ENCODE measurements at regions of chr18 and their contacts with region 1.

Region 1: GRCh38 chr18:12838178-12838634 is 45.8 kb downstream of the PTPN2 start:
- DNase-seq: peak; percentile 74
- H3K4me3 Mint-ChIP-seq: peak overlapping the region; percentile 84
- H3K27ac Mint-ChIP-seq: peak overlapping the region; percentile 89
- H3K4me1 Mint-ChIP-seq: peaks cover 51% of the 10 kb centered on the region
- H3K27me3 Mint-ChIP-seq: no peaks in the 10 kb centered on the region

Region 2: DNA sequence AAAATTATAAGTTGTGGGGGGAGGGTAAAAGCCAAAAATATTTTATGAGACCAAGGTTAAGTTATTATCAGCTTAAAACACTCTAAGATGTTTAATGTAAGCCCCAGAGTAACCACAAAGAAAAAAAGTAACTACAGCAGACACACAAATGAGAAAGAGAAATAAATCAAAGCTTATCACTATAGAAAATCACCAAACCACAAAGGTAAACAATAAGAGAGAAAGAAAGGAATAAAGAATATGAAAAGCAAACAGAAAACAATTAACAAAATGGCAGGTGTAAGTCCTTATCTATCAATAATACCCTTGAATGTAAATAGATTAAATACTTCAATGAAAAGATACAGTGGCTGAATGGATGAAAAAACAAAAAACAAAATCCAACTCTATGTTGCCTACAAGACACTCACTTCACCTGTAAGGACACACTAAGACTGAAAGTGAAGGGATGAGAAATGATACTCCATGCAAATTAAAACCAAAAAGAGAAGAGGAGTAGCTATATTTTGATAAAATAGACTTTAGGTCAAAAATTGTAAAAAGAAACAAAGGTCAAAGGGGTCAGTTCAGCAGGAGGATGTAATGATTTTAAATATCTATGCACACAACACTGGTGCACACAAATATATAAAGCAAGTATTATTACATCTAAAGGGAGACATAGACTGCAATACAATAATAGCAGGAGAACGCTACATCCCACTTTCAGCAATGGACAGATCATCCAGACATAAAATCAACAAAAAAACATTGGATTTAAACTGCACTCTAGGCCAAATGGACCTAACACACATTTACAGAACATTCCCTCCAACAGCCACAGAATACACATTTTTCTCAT is 34.9 kb before region 1 on chr18:
- intact Hi-C with region 1: loop called (anchors 5 kb)
- DNase-seq: no peak
- H3K4me3 Mint-ChIP-seq: no peak overlapping the region
- H3K27ac Mint-ChIP-seq: no peak overlapping the region
- H3K4me1 Mint-ChIP-seq: peaks cover 13% of the 10 kb centered on the region
- H3K27me3 Mint-ChIP-seq: no peaks in the 10 kb centered on the region

Region 3: DNA sequence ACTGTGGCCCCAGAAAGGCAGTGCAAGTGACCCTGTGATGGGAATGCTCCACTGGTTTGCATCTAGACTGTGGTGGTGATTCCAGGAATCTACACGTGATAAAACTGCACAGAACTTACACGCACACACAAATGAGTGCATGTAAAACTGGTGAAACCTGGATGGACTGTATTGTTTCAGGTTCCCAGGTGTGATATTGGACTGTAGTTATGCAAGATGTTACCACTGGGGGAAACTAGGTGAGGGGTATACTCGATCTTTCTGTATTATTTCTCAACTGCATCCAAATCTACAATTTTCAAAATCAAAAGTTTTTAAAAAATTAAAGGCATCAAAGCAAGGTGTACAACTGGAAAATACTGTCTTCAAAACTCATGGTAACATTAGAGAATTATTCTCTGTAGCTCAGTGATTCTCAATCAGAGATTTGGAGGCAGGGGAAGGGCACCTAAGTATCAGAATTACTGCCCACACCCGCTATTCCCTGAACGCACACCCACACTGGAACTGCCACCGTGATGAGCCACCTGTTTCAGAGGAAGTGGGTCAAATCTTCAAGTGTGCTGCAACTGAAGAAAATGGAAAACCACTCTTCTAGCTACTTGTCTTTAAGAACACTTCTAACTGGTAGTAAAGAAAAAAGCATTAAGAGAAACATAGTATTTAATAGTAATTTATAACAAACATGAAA is 19.2 kb after region 1 on chr18:
- intact Hi-C with region 1: loop called (anchors 1 kb)
- DNase-seq: peak; percentile 73
- H3K4me3 Mint-ChIP-seq: peak overlapping the region; percentile 38
- H3K27ac Mint-ChIP-seq: peak overlapping the region; percentile 30
- H3K4me1 Mint-ChIP-seq: peaks cover 60% of the 10 kb centered on the region
- H3K27me3 Mint-ChIP-seq: no peaks in the 10 kb centered on the region

Region 4: DNA sequence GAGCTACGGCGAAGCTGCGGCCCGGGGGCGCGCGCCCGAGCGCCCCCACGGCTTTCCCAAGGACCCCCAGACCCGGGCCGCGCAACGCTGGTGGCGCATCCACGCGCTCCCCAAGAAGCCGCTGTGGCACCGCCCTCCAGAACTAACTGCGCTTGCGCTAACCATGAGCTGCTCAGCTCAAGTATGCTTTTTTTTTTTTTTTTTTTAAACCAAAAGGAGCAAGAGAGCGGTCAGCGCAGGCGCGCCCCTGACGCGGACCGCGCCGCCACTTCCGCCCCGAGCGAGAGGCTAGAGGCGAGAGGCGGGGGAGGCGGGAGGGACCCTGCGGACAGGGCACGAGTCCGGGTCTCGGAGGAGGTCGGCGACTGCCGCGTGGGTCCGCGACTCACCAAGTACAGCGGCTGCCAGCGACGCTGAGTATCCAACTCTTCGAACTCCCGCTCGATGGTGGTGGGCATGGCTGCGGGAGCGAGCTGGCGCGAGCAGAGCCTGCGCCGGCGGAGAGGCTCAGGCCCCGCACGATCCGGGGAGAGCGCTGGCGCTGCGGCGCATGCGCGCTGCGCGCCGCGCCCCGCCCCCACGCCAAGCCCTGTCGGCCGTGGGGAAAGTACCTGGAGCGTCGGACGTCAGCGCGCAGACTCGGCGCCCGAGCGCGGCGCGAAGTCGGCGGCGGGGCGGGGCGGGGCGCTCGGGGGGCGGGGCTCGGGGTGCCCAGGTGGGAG is 45.6 kb after region 1 on chr18 and contains the start of gene PTPN2:
- intact Hi-C with region 1: loop called (anchors 1 kb)
- DNase-seq: peak; percentile 97
- H3K4me3 Mint-ChIP-seq: peak within 1 kb of the TSS; percentile 90
- H3K27ac Mint-ChIP-seq: peak within 1 kb of the TSS; percentile 94
- H3K4me1 Mint-ChIP-seq: peaks cover 57% of the 10 kb centered on the region
- H3K27me3 Mint-ChIP-seq: no peaks in the 10 kb centered on the region
- total RNA-seq, gene PTPN2: 68.8 and 72.5 TPM in 2 replicates